Dendritic cell treated with granulocyte-macrophage colony-stimulating factor and Interleukin-4, amounts not matched to agents 40 ng/mL and 50 ng/mL, for 4 days (primary cell): ENCODE measurements at regions of chr16 and their contacts with region 1.

Region 1: GRCh38 chr16:2340564-2341455 is at the start of gene ABCA3:
- H3K4me3 Mint-ChIP-seq: peak within 1 kb of the TSS; percentile 75
- H3K27ac Mint-ChIP-seq: peak within 1 kb of the TSS; percentile 41
- H3K4me1 Mint-ChIP-seq: peaks cover 8% of the 10 kb centered on the region
- H3K27me3 Mint-ChIP-seq: peaks cover 64% of the 10 kb centered on the region

Region 2: DNA sequence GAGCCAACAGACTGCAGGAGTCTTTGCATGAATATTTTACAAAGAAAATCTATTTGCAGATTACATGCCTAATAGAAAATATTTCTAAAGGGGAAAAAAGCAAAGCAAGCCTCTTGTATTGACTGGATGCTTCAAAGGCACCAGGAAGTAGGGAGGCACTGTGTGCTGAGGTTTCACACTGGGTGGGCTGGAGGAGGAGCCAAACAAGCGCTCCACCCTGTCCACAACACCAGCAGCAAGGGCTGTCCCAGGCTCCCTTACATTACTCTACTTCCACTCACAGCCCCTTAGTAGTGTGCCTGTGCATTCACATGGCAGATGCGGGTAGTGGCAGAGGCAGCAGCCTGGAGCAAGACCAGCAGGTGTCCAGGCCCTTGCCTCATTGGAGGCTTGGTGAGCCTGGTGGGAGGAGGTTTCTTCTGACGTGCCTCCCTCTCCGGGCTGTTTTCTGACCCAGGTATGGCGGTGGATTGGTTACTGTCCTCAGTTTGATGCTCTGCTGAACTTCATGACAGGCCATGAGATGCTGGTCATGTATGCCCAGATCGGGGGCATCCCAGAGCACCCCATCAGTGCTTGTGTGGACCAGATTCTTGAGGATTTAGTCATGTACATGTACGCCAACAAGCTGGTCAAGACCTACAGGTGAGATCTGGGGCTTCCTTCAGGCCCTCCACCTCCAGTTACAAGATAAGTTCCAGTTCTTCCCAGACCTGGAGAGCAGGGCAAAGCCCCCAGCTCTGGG is 81.5 kb after region 1 on chr16:
- intact Hi-C with region 1: loop called (anchors 5 kb)
- H3K4me3 Mint-ChIP-seq: no peak overlapping the region
- H3K27ac Mint-ChIP-seq: no peak overlapping the region
- H3K4me1 Mint-ChIP-seq: peaks cover 10% of the 10 kb centered on the region
- H3K27me3 Mint-ChIP-seq: peaks cover 11% of the 10 kb centered on the region

Region 3: GRCh38 chr16:2614761-2615191 is 274.0 kb after region 1 on chr16:
- intact Hi-C with region 1: no loop called
- H3K4me3 Mint-ChIP-seq: no peak overlapping the region
- H3K27ac Mint-ChIP-seq: no peak overlapping the region
- H3K4me1 Mint-ChIP-seq: peaks cover 10% of the 10 kb centered on the region
- H3K27me3 Mint-ChIP-seq: no peaks in the 10 kb centered on the region